IMR-90 (cell line): ENCODE measurements at regions of chr2 and their contacts with region 1.

Region 1: GRCh38 chr2:201807452-201807999 is 1.2 kb downstream of the CDK15 start:
- DNase-seq: peak; percentile 63
- ATAC-seq: peak; percentile 81
- H3K4me3 ChIP-seq: no peak overlapping the region
- H3K27ac ChIP-seq: peak overlapping the region; percentile 65
- H3K4me1 ChIP-seq: peaks cover 12% of the 10 kb centered on the region
- H3K27me3 ChIP-seq: no peaks in the 10 kb centered on the region
- CTCF ChIP-seq: no peak
- POLR2A ChIP-seq: no peak
- RAD21 ChIP-seq: no peak

Region 2: GRCh38 chr2:201780674-201781581 is 26.6 kb before region 1 on chr2 and contains the start of gene ALS2:
- CTCF ChIA-PET with region 1: interaction called, 3 read pairs
- POLR2A ChIA-PET with region 1: interaction called, 11 read pairs
- dilution Hi-C with region 1: no loop called
- in situ Hi-C with region 1: no loop called
- intact Hi-C with region 1: no loop called
- DNase-seq: peak; percentile 100
- ATAC-seq: peak; percentile 92
- H3K4me3 ChIP-seq: peak within 1 kb of the TSS; percentile 76
- H3K27ac ChIP-seq: peak within 1 kb of the TSS; percentile 41
- H3K4me1 ChIP-seq: no peaks in the 10 kb centered on the region
- H3K27me3 ChIP-seq: no peaks in the 10 kb centered on the region
- CTCF ChIP-seq: no peak
- POLR2A ChIP-seq: peak; percentile 66
- RAD21 ChIP-seq: no peak
- total RNA-seq, gene ALS2: 37.8 and 42.3 TPM in 2 replicates

Region 3: GRCh38 chr2:201854221-201854801 is 46.8 kb after region 1 on chr2:
- CTCF ChIA-PET with region 1: interaction called, 3 read pairs
- POLR2A ChIA-PET with region 1: interaction called, 3 read pairs
- dilution Hi-C with region 1: no loop called
- in situ Hi-C with region 1: loop called (anchors 5 kb)
- intact Hi-C with region 1: loop called (anchors 2 kb)
- DNase-seq: peak; percentile 99
- ATAC-seq: peak; percentile 88
- H3K4me3 ChIP-seq: peak overlapping the region; percentile 38; the same call in 1 of the 2 replicates
- H3K27ac ChIP-seq: peak overlapping the region; percentile 77
- H3K4me1 ChIP-seq: peaks cover 38% of the 10 kb centered on the region
- H3K27me3 ChIP-seq: no peaks in the 10 kb centered on the region
- CTCF ChIP-seq: no peak
- POLR2A ChIP-seq: no peak
- RAD21 ChIP-seq: 0 out of 2 replicates have a peak, but pooled peaks have one; percentile 10

Region 4: GRCh38 chr2:202193881-202194353 is 386.4 kb after region 1 on chr2:
- CTCF ChIA-PET with region 1: no interaction called
- POLR2A ChIA-PET with region 1: no interaction called
- dilution Hi-C with region 1: no loop called
- in situ Hi-C with region 1: no loop called
- intact Hi-C with region 1: no loop called
- DNase-seq: no peak
- ATAC-seq: no peak; the same call in 1 of the 2 replicates
- H3K4me3 ChIP-seq: no peak overlapping the region
- H3K27ac ChIP-seq: no peak overlapping the region
- H3K4me1 ChIP-seq: no peaks in the 10 kb centered on the region
- H3K27me3 ChIP-seq: no peaks in the 10 kb centered on the region
- CTCF ChIP-seq: no peak
- POLR2A ChIP-seq: no peak
- RAD21 ChIP-seq: no peak